Endothelial cell of umbilical vein (primary cell): ENCODE measurements at regions of chr1 and their contacts with region 1.

Region 1: DNA sequence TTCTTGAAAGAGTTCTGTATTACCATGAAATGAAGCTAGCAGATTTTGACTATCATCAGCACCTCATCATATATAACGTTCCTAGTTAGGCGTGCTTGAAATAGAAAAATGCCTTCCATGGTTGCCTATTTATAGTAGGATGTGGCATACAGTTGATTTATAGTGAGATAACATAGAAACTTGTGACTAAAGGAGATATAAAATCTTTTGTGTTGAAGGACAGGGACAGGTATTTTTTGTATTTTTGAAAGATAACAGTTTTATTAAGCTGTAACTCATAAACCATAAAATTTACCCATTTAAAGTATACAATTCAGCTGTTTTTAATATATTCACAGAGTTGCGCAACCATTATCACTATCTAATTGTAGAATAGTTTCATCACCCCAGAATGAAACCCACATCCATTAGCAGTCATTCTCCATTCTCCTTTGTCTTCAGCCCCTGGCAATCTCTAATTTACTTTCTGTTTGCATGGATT is 19.3 kb downstream of the SPEN start:
- DNase-seq: no peak
- H3K4me3 ChIP-seq: no peak overlapping the region
- H3K27ac ChIP-seq: no peak overlapping the region
- H3K4me1 ChIP-seq: peaks cover 4% of the 10 kb centered on the region
- H3K27me3 ChIP-seq: no peaks in the 10 kb centered on the region
- CTCF ChIP-seq: no peak
- POLR2A ChIP-seq: no peak

Region 2: DNA sequence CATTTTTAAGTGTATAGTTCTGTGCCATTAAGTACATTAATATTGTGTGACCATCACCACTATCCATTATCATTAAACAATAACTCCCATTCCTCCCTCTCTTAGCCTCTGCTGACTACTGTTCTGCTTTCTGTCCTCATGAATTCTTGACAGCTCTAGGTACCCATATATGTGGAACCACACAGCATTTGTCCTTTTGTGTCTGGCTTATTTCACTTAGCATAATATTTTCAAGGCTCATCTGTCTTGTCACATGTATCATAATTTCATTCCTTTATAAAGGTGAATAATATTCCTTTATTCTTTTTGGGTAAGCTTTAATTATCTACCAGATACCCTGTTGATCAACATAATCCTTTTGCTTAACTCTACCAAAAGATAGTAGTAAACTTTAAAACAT is 28.5 kb after region 1 on chr1:
- CTCF ChIA-PET with region 1: no interaction called
- POLR2A ChIA-PET with region 1: interaction called, 3 read pairs
- dilution Hi-C with region 1: no loop called
- intact Hi-C with region 1: loop called (anchors 2 kb)
- DNase-seq: no peak
- H3K4me3 ChIP-seq: no peak overlapping the region
- H3K27ac ChIP-seq: no peak overlapping the region
- H3K4me1 ChIP-seq: peaks cover 4% of the 10 kb centered on the region
- H3K27me3 ChIP-seq: no peaks in the 10 kb centered on the region
- CTCF ChIP-seq: no peak
- POLR2A ChIP-seq: no peak